Dorsolateral prefrontal cortex (tissue), 120 donors: ENCODE measurements at regions of chr13 and their contacts with region 1.

Region 1: GRCh38 chr13:23466144-23467002 is 32.9 kb upstream of the SACS start:
- DNase-seq: peak; percentile 57 to 85 (median 74)
- H3K4me3 ChIP-seq: peak overlapping the region; percentile 43 to 81 (median 65)
- H3K27ac ChIP-seq: peak overlapping the region; percentile 5 to 98 (median 93)
- H3K27me3 ChIP-seq: no peaks in the 10 kb centered on the region
- CTCF ChIP-seq: peak; percentile 36 to 82 (median 66)

Region 2: DNA sequence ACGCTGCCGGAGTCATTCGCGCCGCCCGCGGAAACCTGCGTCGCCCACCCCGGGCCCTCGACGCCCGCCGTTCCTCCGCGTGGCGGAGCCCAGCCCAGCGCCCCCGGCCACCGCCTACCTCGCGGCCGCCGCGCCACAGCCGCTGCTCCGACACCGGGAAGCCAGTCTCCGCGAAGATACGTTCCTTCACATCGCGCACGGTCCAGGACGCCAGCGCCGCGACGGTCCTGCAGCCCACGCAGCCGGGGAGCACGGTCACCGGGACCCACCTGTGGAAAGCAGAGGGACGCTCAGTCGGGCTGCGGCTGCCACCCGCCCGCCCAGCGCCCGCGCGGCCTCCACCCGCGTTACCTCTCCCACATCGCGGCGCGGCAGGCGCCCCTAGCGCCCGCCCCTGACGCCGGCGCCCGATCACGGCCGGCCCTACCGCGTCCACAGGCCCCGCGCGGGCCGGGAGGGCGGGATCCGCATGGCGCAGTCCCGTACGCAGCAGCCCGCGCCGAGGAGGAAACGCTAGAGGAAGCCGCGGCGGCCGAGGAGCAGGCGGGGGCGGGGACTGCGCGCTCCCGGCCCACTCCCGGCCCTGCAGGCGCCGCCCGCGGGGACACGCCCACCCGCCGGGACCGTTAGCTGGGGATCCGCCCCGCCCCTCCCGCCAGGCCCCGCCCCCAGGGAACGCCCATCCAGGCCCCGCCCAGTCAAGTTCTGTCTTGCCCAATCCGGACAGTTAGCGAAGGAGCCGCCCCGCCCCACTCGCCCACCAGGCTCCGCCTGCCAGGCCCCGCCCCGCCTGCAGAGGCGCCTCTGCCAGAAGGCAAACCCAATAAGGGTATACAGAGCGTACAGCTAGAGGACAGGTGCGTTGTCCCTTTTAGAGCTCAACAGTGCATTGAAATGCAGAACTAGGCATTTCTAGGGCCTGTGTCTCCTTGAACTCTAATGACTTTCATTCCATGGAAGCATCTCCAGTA is 91.1 kb before region 1 on chr13:
- intact Hi-C with region 1: loop called in 1 of 2 experiments (anchors 1 kb)
- DNase-seq: peak; percentile 95 to 99 (median 96)
- H3K4me3 ChIP-seq: peak overlapping the region; percentile 59 to 98 (median 84)
- H3K27ac ChIP-seq: peak overlapping the region; percentile 0 to 94 (median 83)
- H3K27me3 ChIP-seq: no peaks in the 10 kb centered on the region
- CTCF ChIP-seq: peak in 39 of 56 donors; percentile 6 to 67 (median 35)

Region 3: DNA sequence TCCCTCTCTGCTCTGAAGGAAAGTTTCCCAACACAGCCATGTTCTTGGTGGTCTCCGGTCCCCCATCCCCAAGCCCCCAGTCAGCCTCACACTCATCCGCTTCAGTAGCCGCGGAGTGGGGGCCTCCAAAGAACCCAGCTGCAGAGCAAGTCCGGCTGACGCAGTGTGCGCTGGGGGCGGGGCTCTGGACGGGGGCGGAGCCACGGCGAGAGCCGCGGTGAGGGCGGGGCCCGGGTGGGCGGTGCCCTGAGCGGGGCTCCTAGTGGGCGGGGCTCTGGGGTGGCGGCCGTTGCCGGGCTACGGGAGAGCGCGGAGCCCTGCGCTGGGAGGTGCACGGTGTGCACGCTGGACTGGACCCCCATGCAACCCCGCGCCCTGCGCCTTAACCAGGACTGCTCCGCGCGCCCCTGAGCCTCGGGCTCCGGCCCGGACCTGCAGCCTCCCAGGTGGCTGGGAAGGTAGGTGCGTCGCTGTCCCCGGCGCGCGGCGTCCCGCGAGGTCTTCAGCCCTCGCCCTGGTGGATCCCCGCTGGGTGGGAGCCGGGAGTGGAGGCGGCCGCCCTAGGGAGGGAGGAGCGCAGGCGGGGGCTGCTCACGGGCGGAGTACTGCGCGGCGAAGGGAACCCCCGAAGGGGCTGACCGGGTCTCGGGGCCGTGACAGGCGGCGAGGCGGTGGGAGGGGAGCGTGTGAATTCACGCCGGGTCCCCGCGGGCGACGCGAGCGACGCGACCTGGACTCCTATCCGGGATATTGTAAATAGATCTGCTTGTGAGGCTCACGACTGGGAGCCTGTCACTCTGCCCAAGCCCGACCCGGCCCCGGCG is 112.9 kb after region 1 on chr13:
- intact Hi-C with region 1: loop called in 1 of 2 experiments (anchors 5 kb)
- DNase-seq: peak; percentile 55 to 92 (median 83)
- H3K4me3 ChIP-seq: peak overlapping the region; percentile 59 to 96 (median 84)
- H3K27ac ChIP-seq: peak overlapping the region in 45 of 59 donors; percentile 16 to 88 (median 66)
- H3K27me3 ChIP-seq: peaks cover 0 to 24% (median 3%) of the 10 kb centered on the region in 45 donors
- CTCF ChIP-seq: no peak

Region 4: GRCh38 chr13:23707674-23708073 is 241.3 kb after region 1 on chr13:
- intact Hi-C with region 1: loop called in 1 of 2 experiments (anchors 10 kb)
- DNase-seq: no peak
- H3K4me3 ChIP-seq: no peak overlapping the region
- H3K27ac ChIP-seq: no peak overlapping the region
- H3K27me3 ChIP-seq: no peaks in the 10 kb centered on the region
- CTCF ChIP-seq: peak in 38 of 56 donors; percentile 8 to 55 (median 30)

Region 5: GRCh38 chr13:23871616-23872220 is 405.3 kb after region 1 on chr13:
- intact Hi-C with region 1: loop called (anchors 1 to 2 kb)
- DNase-seq: no peak
- H3K4me3 ChIP-seq: no peak overlapping the region
- H3K27ac ChIP-seq: no peak overlapping the region
- H3K27me3 ChIP-seq: no peaks in the 10 kb centered on the region
- CTCF ChIP-seq: peak; percentile 44 to 92 (median 75)

Region 6: DNA sequence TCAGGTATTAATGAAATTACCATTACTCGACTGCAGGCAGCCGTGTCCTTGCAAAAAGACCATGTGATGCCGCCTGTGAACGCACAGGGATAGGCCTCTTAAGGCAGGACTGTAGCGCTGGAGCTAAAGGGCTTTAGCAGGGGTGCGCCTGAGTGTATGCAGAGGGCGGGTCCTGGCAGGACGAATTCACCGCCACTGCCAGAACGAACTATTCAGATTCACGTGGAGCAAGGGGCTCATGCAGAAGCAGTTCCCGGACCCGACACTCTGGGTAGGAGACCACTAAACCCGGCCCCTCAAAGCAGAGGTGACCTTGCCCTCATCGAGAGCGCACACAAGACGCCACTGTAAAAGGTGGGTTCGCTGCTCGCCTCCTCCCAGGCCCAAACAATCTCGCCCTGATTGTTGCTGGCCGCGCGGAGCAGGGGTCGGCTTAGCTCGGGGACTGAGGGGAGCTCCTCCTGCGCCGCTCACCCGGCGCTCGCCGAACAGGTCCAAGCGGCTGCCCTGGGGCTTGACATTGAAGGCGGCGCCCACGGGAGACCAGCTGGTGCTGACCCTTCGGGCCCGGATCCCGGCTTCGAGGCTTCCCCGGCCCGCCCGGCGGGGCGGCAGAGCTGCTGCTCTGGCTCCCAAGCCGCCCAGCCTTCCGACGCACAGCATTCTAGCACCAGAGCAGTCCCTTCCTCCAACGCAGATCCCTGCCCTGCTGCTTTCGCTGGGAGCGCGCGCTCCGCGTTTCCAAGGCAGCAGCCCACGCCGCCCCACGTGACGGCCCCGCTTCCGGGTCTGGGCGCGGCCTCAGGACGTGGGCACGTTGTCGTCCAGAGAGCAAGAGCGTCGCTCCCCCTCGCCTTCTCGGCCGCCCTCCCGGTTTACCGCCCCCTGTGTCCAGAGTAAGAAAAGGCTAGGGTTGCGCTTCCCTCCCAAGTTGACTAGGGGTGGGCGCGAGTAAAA is 422.6 kb after region 1 on chr13 and contains the start of gene MIPEP:
- intact Hi-C with region 1: loop called in 1 of 2 experiments (anchors 5 kb)
- DNase-seq: peak; percentile 89 to 96 (median 94)
- H3K4me3 ChIP-seq: peak within 1 kb of the TSS; percentile 55 to 99 (median 96)
- H3K27ac ChIP-seq: peak within 1 kb of the TSS in 56 of 59 donors; percentile 36 to 92 (median 79)
- H3K27me3 ChIP-seq: no peaks in the 10 kb centered on the region
- CTCF ChIP-seq: peak; percentile 72 to 98 (median 90)
- total RNA-seq, gene MIPEP: 8.6 to 21.4 (median 12.6) TPM